ENCODE measurements at regions of chr1 and their contacts with region 1.

Region 1: DNA sequence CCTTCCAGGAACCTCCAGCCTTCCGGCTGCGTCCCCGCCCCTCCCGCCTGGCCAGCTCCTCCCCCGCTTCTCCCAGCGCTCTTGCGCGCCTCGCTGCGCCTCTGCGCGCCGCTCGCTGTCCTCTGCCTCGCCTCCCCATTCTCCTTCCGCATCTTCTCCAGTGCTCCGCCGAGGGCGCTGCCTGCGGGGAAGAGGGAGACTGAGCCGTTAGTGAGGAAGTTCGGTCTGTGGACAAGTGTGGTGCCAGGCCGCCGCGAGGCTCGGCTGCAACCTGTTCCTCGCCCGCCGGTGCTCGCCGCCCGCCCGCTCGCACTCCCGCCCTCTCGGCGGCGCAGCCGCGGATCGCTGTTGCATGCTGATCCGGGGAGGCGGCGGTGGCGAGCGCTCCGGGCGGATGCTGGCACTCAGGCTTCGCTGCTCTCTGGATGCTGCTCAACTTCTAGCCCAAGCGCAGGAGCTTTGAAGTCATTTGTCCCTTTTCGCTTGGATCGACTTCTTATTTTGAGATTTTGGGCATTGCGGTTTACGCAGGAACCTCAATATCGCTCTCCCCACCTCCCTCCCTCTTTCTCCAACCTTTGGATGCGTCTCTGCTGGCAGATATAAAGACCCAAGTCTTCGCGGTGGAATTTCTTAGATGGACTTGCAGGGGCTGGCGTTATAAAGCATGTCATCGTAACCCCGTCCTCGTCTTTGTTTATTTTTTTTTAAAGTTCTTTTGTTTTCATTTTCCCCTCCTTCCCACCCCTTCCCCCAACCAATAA is 614 bp upstream of the CACNA1E start:
- DNase-seq: no peak
- H3K4me3 ChIP-seq: peak overlapping the region in 1 of 2 donors; percentile 16
- H3K27ac ChIP-seq: no peak overlapping the region
- H3K4me1 ChIP-seq: peaks cover 0 to 22% (median 10%) of the 10 kb centered on the region in 4 donors
- H3K27me3 ChIP-seq: peaks cover 0 to 79% of the 10 kb centered on the region in 2 donors
- CTCF ChIP-seq: no peak

Region 2: GRCh38 chr1:182054698-182055326 is 572.1 kb after region 1 on chr1:
- intact Hi-C with region 1: loop called (anchors 10 kb)
- DNase-seq: peak in 1 of 2 donors; percentile 56
- H3K4me3 ChIP-seq: no peak overlapping the region
- H3K27ac ChIP-seq: no peak overlapping the region
- H3K4me1 ChIP-seq: no peaks in the 10 kb centered on the region
- H3K27me3 ChIP-seq: peaks cover 0 to 34% of the 10 kb centered on the region in 2 donors
- CTCF ChIP-seq: peak; percentile 27 to 28